Activated B cell treated with CpG ODN at 0.5 μM for 24 hours (primary cell): ENCODE measurements at regions of chr3 and their contacts with region 1.

Region 1: DNA sequence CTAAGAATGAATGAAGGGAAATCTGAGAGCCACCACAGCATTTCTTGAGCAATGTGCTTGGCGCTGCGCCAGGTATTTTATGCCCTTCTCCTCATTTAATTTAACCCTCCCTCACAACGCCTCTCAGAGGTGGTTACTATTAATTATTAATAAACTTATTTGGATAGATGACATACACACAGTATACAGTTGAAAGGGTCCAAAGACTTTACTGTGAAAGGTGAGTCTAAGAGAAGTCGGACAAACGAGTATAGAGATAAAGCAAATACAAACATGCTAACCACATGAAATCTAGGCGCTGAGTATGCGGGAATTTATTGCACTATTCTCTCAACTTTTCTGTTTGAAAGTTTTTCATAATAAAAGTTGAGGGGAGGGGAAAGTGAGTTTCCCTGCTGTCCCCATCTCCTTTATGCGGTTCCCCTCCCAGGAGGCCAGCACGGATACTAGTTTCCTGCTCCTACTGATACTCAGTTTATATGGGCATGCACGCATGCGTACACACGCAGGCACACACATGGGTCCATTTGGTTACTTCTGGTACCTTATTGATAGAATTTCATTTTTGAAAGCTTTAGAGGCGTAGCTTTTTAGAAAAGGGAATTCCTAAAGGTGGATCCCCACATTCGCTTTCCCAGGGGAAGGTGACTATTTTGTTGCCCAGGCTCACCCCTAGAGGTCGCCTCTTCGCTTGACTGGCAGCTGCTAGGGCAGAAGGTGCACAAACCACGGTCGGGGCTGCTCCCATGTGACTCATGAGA is 28.5 kb upstream of the KCTD6 start:
- DNase-seq: peak; percentile 41
- ATAC-seq: peak; percentile 96
- H3K4me3 Mint-ChIP-seq: peak overlapping the region; percentile 47
- H3K27ac Mint-ChIP-seq: no peak overlapping the region
- H3K4me1 Mint-ChIP-seq: peaks cover 10% of the 10 kb centered on the region
- H3K27me3 Mint-ChIP-seq: no peaks in the 10 kb centered on the region
- CTCF ChIP-seq: peak; percentile 37

Region 2: DNA sequence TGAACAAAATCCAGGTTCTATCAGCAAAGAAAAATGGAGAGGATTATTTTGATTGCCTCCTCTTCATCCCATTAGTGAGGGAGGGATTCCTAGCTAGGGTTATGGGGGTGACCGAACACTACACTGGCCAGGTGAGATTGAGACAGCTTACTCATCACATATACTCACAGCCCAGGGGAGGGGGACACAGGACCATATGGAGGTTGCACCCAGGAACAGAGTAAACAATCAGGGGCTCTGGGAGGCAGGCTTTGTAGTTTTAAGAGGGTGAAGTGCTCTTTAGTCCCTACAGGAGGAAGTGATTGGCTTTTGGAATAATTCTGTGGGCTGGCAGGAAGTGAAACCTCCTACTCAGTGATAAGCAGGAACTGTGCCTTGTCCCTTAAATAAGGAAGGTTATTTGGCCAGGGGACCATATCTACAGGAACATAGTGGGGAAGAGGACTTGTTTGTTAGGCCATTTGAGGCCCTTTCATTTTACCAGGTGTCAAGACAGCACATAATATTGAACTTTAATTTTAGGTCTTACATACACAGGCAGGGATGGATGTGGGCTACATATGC is 11.1 kb after region 1 on chr3:
- CTCF ChIA-PET with region 1: interaction called, 6 read pairs
- POLR2A ChIA-PET with region 1: interaction called, 3 read pairs
- intact Hi-C with region 1: loop called (anchors 1 kb)
- DNase-seq: no peak
- ATAC-seq: peak; percentile 65
- H3K4me3 Mint-ChIP-seq: peak overlapping the region; percentile 44
- H3K27ac Mint-ChIP-seq: peak overlapping the region; percentile 76
- H3K4me1 Mint-ChIP-seq: peaks cover 23% of the 10 kb centered on the region
- H3K27me3 Mint-ChIP-seq: no peaks in the 10 kb centered on the region
- CTCF ChIP-seq: no peak

Region 3: DNA sequence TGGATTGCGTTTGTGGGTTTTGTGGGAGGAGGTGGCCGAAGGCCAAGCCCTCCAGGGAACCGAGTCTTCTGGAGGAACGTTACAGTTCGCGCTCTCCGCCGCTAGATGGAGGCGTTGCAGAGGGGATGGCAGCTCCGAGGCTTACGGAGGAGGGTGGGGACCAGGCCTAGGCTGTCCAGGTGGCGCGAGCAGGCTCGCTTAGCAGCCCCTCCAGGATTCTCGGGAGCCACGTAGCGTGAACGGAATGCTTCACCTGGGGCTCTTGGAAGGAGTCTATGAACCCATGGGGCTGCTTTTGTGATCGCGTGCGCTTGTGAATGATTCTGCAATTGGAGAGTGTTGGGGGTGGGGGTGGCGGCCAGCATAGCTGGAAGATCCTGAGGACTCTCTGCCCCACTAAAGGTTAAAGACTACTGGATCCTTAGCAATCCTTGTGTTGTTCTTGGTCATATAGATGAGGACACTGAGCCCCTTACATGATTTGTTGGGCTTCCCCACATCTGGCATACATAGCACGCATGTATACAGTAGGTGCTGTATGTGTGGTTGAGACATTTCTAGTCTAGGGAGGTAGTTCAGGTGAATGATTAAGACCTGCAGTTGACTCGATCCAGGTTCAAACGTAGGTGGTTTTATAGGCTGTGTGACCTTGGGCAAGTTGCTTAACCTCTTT is 177.5 kb after region 1 on chr3:
- CTCF ChIA-PET with region 1: no interaction called
- POLR2A ChIA-PET with region 1: no interaction called
- intact Hi-C with region 1: no loop called
- DNase-seq: peak; percentile 50
- ATAC-seq: peak; percentile 96
- H3K4me3 Mint-ChIP-seq: no peak overlapping the region
- H3K27ac Mint-ChIP-seq: no peak overlapping the region
- H3K4me1 Mint-ChIP-seq: peaks cover 7% of the 10 kb centered on the region
- H3K27me3 Mint-ChIP-seq: peaks cover 2% of the 10 kb centered on the region
- CTCF ChIP-seq: peak; percentile 37